SK-N-SH (cell line): ENCODE measurements at regions of chr11 and their contacts with region 1.

Region 1: DNA sequence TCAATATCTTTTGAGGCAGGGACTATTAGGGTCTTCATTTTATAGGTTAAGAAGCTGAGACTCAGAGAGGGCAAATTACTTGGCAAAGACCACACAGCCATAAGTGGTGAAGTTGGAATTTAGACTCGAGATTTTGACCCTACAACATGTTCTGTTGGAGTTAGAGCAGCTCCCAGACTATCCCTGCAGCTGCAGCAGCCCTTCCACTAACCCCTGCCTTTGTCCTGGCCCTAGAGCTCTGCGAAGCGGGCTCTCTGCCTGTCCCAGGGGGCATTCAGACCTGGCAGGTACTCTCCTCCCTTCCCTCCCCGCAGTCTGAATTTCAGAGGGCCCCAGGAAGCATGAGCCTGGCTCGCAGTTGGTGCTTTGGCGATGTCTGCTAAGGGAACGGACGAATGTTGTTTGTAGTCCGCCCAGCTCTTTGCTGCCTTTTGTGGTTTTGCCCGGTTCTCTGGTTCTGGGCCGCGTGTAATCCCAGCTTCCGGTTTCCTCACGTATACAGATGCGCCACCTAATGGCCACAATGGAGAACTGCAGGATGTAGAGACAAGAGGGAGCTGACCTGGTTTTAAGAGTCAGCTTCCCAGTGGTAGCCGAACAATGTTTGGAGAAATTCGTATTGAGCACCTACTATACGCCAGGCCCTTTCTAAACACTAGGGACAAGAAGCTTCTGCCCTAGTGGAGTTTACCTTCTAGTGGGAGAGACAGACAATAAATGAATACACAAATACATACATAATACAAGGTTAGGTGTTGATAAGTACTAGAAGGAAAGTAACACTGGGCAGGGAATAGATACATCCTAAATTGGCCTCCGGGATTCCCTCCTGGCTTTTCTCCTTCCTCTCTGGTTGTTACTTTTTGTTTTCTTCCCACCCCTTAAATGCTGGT is 125.2 kb downstream of the ST3GAL4 start:
- DNase-seq: peak; percentile 88
- H3K4me3 ChIP-seq: no peak overlapping the region
- H3K27ac ChIP-seq: peak overlapping the region; percentile 37 to 58; a peak in 3 of 4 replicates
- H3K4me1 ChIP-seq: peaks cover 0 to 5% of the 10 kb centered on the region in 2 experiments; a peak in 1 of 4 replicates
- H3K27me3 ChIP-seq: no peaks in the 10 kb centered on the region
- CTCF ChIP-seq: peak; percentile 93
- EP300 ChIP-seq: no peak
- RAD21 ChIP-seq: peak; percentile 83

Region 2: GRCh38 chr11:126310228-126310991 is 170.2 kb before region 1 on chr11:
- CTCF ChIA-PET with region 1: interaction called, 172 read pairs
- POLR2A ChIA-PET with region 1: interaction called, 12 read pairs
- DNase-seq: peak; percentile 81
- H3K4me3 ChIP-seq: no peak overlapping the region; a peak in 1 of 4 replicates
- H3K27ac ChIP-seq: no peak overlapping the region
- H3K4me1 ChIP-seq: peaks cover 4% of the 10 kb centered on the region in 2 experiments; a peak in 2 of 4 replicates
- H3K27me3 ChIP-seq: no peaks in the 10 kb centered on the region
- CTCF ChIP-seq: peak; percentile 93
- EP300 ChIP-seq: no peak
- RAD21 ChIP-seq: peak; percentile 98

Region 3: GRCh38 chr11:126446581-126446980 is 34.1 kb before region 1 on chr11:
- CTCF ChIA-PET with region 1: interaction called, 153 read pairs
- POLR2A ChIA-PET with region 1: interaction called, 9 read pairs
- DNase-seq: no peak
- H3K4me3 ChIP-seq: no peak overlapping the region
- H3K27ac ChIP-seq: no peak overlapping the region
- H3K4me1 ChIP-seq: peaks cover 0 to 13% of the 10 kb centered on the region in 2 experiments; a peak in 1 of 4 replicates
- H3K27me3 ChIP-seq: no peaks in the 10 kb centered on the region
- CTCF ChIP-seq: no peak
- EP300 ChIP-seq: no peak
- RAD21 ChIP-seq: no peak

Region 4: DNA sequence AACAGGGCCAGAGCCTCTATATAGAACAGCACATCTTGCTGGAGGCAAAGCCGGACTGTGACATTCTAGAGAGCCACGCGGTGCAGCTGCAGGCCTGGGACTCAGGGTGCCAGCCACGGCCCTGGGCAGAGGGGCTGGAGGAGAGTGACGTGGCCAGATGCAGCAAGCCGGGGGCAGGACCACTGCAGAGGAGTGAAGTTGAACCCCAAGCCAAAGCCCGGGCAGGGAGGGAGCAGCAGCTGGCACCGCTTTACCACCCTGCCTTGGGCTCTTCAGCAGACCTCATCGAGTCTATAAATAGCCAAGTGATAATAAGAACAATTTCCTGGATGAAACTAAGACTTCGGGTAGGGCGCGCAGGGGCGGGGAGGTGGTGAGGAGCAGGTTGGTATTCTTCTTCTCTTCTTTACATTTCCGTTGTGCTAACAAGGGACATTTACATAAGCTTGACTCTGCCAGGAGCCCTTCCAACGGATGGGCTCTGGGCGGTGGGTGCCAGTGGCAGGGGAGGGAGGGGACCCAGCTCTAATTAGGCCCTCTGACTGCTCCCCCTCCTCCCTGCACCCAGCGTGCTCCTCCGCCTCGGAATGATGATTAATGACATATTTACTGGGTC is 15.0 kb before region 1 on chr11:
- CTCF ChIA-PET with region 1: interaction called, 78 read pairs
- POLR2A ChIA-PET with region 1: no interaction called
- DNase-seq: peak; percentile 57
- H3K4me3 ChIP-seq: no peak overlapping the region
- H3K27ac ChIP-seq: no peak overlapping the region
- H3K4me1 ChIP-seq: peaks cover 8 to 18% of the 10 kb centered on the region in 2 experiments; a peak in 2 of 4 replicates
- H3K27me3 ChIP-seq: no peaks in the 10 kb centered on the region
- CTCF ChIP-seq: no peak
- EP300 ChIP-seq: no peak
- RAD21 ChIP-seq: no peak

Region 5: GRCh38 chr11:126514061-126514693 is 33.5 kb after region 1 on chr11:
- CTCF ChIA-PET with region 1: interaction called, 22 read pairs
- POLR2A ChIA-PET with region 1: interaction called, 4 read pairs
- DNase-seq: peak; percentile 73
- H3K4me3 ChIP-seq: no peak overlapping the region
- H3K27ac ChIP-seq: peak overlapping the region in 1 of 2 experiments; percentile 94; a peak in 2 of 4 replicates
- H3K4me1 ChIP-seq: peaks cover 0 to 62% of the 10 kb centered on the region in 2 experiments; a peak in 2 of 4 replicates
- H3K27me3 ChIP-seq: no peaks in the 10 kb centered on the region
- CTCF ChIP-seq: no peak
- EP300 ChIP-seq: peak in 1 of 2 experiments; percentile 82; a peak in 2 of 4 replicates
- RAD21 ChIP-seq: no peak

Region 6: GRCh38 chr11:126592496-126593410 is 112.1 kb after region 1 on chr11:
- CTCF ChIA-PET with region 1: interaction called, 17 read pairs
- POLR2A ChIA-PET with region 1: no interaction called
- DNase-seq: no peak
- H3K4me3 ChIP-seq: no peak overlapping the region
- H3K27ac ChIP-seq: no peak overlapping the region
- H3K4me1 ChIP-seq: peaks cover 0 to 8% of the 10 kb centered on the region in 2 experiments; a peak in 1 of 4 replicates
- H3K27me3 ChIP-seq: no peaks in the 10 kb centered on the region
- CTCF ChIP-seq: no peak
- EP300 ChIP-seq: no peak
- RAD21 ChIP-seq: no peak

Region 7: GRCh38 chr11:126628790-126629621 is 148.3 kb after region 1 on chr11:
- CTCF ChIA-PET with region 1: no interaction called
- POLR2A ChIA-PET with region 1: no interaction called
- DNase-seq: no peak
- H3K4me3 ChIP-seq: no peak overlapping the region
- H3K27ac ChIP-seq: peak overlapping the region; percentile 19 to 20; a peak in 2 of 4 replicates
- H3K4me1 ChIP-seq: peaks cover 9 to 18% of the 10 kb centered on the region in 2 experiments; a peak in 3 of 4 replicates
- H3K27me3 ChIP-seq: no peaks in the 10 kb centered on the region
- CTCF ChIP-seq: 0 out of 2 replicates have a peak, but pooled peaks have one; percentile 23
- EP300 ChIP-seq: peak; percentile 22 to 40; a peak in 1 of 4 replicates
- RAD21 ChIP-seq: no peak